Activated CD4-positive, alpha-beta memory T cell treated with anti-CD3 and anti-CD28 coated beads for 36 hours (primary cell): ENCODE measurements at regions of chr7 and their contacts with region 1.

Region 1: DNA sequence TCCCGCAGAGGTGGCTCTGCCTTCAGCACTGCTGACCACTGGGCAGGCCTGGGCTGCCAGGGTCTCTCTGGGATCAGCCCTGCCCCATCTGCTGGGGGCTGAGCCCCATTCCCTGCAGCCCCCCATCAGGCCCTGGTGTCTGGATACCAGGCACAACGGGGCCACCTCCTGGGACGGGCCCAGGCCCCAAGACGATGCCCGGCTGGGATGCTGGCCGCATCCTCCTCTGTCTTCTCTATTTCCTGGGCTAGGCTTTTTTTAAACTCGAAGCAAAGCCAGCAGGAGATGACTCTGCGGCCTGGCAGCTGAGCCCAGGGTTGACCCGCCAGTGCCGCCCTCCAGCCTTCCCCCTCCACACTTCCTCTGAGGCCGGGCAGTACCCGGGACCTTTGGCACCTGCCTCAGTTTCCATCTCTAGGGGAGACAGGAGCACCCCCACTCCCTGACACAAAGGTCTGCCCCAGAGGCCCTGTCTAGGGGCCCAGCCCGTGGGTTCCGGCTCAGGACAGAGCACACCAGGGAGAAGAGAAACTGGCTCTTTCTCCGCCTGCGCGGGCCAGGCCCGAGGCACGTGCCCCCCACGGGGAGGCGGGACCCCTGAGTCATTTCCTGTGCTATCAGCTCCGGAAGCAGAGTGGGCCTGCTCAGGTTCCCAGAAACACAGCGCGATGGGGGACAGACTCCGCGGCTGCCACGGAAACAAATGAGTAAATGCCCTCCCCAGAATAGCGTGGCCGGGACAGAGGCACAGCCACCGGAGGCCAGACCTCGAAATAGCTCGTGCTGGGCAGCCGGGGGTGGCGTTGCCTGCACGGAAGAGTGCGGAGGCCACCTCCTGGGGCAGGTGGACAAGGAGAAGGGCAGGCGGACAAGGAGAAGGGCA is 84.6 kb upstream of the PDGFA start:
- DNase-seq: peak; percentile 98
- H3K4me3 Mint-ChIP-seq: peak overlapping the region; percentile 93
- H3K27ac Mint-ChIP-seq: peak overlapping the region; percentile 100
- H3K4me1 Mint-ChIP-seq: peaks cover 61% of the 10 kb centered on the region
- H3K27me3 Mint-ChIP-seq: no peaks in the 10 kb centered on the region

Region 2: GRCh38 chr7:362402-363096 is 241.7 kb before region 1 on chr7:
- CTCF ChIA-PET with region 1: no interaction called
- POLR2A ChIA-PET with region 1: interaction called, 3 read pairs
- intact Hi-C with region 1: loop called (anchors 5 kb)
- DNase-seq: peak; percentile 63
- H3K4me3 Mint-ChIP-seq: peak overlapping the region; percentile 61
- H3K27ac Mint-ChIP-seq: peak overlapping the region; percentile 69
- H3K4me1 Mint-ChIP-seq: peaks cover 64% of the 10 kb centered on the region
- H3K27me3 Mint-ChIP-seq: no peaks in the 10 kb centered on the region

Region 3: GRCh38 chr7:424961-425793 is 179.1 kb before region 1 on chr7:
- CTCF ChIA-PET with region 1: no interaction called
- POLR2A ChIA-PET with region 1: no interaction called
- intact Hi-C with region 1: no loop called
- DNase-seq: no peak
- H3K4me3 Mint-ChIP-seq: no peak overlapping the region
- H3K27ac Mint-ChIP-seq: no peak overlapping the region
- H3K4me1 Mint-ChIP-seq: no peaks in the 10 kb centered on the region
- H3K27me3 Mint-ChIP-seq: no peaks in the 10 kb centered on the region

Region 4: GRCh38 chr7:584122-584465 is 20.1 kb before region 1 on chr7:
- CTCF ChIA-PET with region 1: interaction called, 4 read pairs
- POLR2A ChIA-PET with region 1: interaction called, 69 read pairs
- intact Hi-C with region 1: loop called (anchors 1 kb)
- DNase-seq: peak; percentile 96
- H3K4me3 Mint-ChIP-seq: peak overlapping the region; percentile 80
- H3K27ac Mint-ChIP-seq: peak overlapping the region; percentile 93
- H3K4me1 Mint-ChIP-seq: peaks cover 38% of the 10 kb centered on the region
- H3K27me3 Mint-ChIP-seq: no peaks in the 10 kb centered on the region

Region 5: GRCh38 chr7:657565-658119 is 53.4 kb after region 1 on chr7:
- CTCF ChIA-PET with region 1: no interaction called
- POLR2A ChIA-PET with region 1: no interaction called
- intact Hi-C with region 1: no loop called
- DNase-seq: no peak
- H3K4me3 Mint-ChIP-seq: no peak overlapping the region
- H3K27ac Mint-ChIP-seq: no peak overlapping the region
- H3K4me1 Mint-ChIP-seq: peaks cover 3% of the 10 kb centered on the region
- H3K27me3 Mint-ChIP-seq: no peaks in the 10 kb centered on the region

Region 6: GRCh38 chr7:726084-726853 is 122.0 kb after region 1 on chr7 and contains the start of gene DNAAF5:
- CTCF ChIA-PET with region 1: no interaction called
- POLR2A ChIA-PET with region 1: interaction called, 4 read pairs
- intact Hi-C with region 1: loop called (anchors 1 kb)
- DNase-seq: peak; percentile 92
- H3K4me3 Mint-ChIP-seq: peak within 1 kb of the TSS; percentile 86
- H3K27ac Mint-ChIP-seq: peak within 1 kb of the TSS; percentile 76
- H3K4me1 Mint-ChIP-seq: peaks cover 27% of the 10 kb centered on the region
- H3K27me3 Mint-ChIP-seq: no peaks in the 10 kb centered on the region
- total RNA-seq, gene DNAAF5: 26.8 to 29.5 TPM

Region 7: GRCh38 chr7:831596-832166 is 227.4 kb after region 1 on chr7:
- CTCF ChIA-PET with region 1: no interaction called
- POLR2A ChIA-PET with region 1: interaction called, 4 read pairs
- intact Hi-C with region 1: loop called (anchors 5 kb)
- DNase-seq: peak; percentile 36
- H3K4me3 Mint-ChIP-seq: peak overlapping the region; percentile 74
- H3K27ac Mint-ChIP-seq: peak overlapping the region; percentile 97
- H3K4me1 Mint-ChIP-seq: peaks cover 48% of the 10 kb centered on the region
- H3K27me3 Mint-ChIP-seq: no peaks in the 10 kb centered on the region